Left ventricle myocardium inferior (tissue), 1 donor: ENCODE measurements at regions of chr3 and their contacts with region 1.

Region 1: DNA sequence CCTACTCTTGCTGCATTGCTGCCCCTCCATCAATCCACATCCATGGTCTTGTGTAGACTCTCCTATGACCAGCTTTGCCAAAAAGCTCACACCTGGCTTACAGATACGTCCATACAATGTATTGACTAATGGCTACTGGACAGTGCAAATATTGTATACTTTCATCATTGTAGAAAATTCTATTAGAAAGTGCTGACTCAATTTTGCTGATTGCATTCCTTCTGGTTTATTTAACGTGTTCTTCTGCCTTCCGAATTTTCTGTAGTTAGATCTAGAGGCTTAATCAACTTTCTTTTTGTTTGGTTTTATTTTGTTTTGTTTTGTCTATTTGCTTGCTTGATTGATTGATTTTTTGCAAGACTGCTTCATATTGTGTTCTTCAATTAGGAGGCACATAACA is 29.8 kb upstream of the CNOT10 start:
- DNase-seq: no peak
- H3K4me3 ChIP-seq: no peak overlapping the region
- H3K27ac ChIP-seq: no peak overlapping the region
- H3K4me1 ChIP-seq: no peaks in the 10 kb centered on the region
- H3K27me3 ChIP-seq: no peaks in the 10 kb centered on the region
- CTCF ChIP-seq: no peak

Region 2: GRCh38 chr3:32510075-32510724 is 145.0 kb before region 1 on chr3:
- intact Hi-C with region 1: loop called (anchors 5 kb)
- DNase-seq: peak; percentile 34
- H3K4me3 ChIP-seq: no peak overlapping the region
- H3K27ac ChIP-seq: no peak overlapping the region
- H3K4me1 ChIP-seq: peaks cover 3% of the 10 kb centered on the region
- H3K27me3 ChIP-seq: no peaks in the 10 kb centered on the region
- CTCF ChIP-seq: peak; percentile 76